ENCODE measurements at regions of chr5 and their contacts with region 1.

Region 1: DNA sequence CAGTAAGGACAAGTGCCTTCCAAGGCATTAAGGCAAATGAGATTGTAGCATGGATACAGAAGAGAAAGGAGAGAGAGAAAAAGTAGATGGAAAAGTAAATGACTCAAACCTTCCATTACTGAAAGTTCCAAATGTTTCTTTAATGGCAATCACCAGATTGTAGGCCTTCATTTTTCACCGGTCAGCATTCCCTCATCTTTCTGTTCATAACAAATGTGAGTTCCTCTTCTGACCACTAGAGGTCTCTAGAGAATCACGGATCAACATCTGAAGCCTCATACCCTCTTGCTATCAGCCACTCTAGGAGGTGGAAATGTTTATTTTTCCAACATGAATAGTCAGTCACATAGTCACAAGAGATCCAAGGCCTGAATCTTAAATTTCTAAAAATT is 73.6 kb upstream of the RPS23 start:
- DNase-seq: no peak
- ATAC-seq: no peak
- H3K4me3 Mint-ChIP-seq: no peak overlapping the region
- H3K27ac Mint-ChIP-seq: no peak overlapping the region
- H3K4me1 Mint-ChIP-seq: peaks cover 21% of the 10 kb centered on the region
- H3K27me3 Mint-ChIP-seq: no peaks in the 10 kb centered on the region

Region 2: GRCh38 chr5:82320966-82321365 is 30.8 kb before region 1 on chr5:
- CTCF ChIA-PET with region 1: no interaction called
- POLR2A ChIA-PET with region 1: no interaction called
- intact Hi-C with region 1: no loop called
- DNase-seq: no peak
- ATAC-seq: no peak
- H3K4me3 Mint-ChIP-seq: no peak overlapping the region
- H3K27ac Mint-ChIP-seq: no peak overlapping the region
- H3K4me1 Mint-ChIP-seq: no peaks in the 10 kb centered on the region
- H3K27me3 Mint-ChIP-seq: peaks cover 19% of the 10 kb centered on the region

Region 3: GRCh38 chr5:82466986-82467561 is 115.3 kb after region 1 on chr5:
- CTCF ChIA-PET with region 1: no interaction called
- POLR2A ChIA-PET with region 1: no interaction called
- intact Hi-C with region 1: loop called in 1 of 2 experiments (anchors 10 kb)
- DNase-seq: no peak
- ATAC-seq: peak; percentile 30
- H3K4me3 Mint-ChIP-seq: no peak overlapping the region
- H3K27ac Mint-ChIP-seq: no peak overlapping the region
- H3K4me1 Mint-ChIP-seq: no peaks in the 10 kb centered on the region
- H3K27me3 Mint-ChIP-seq: peaks cover 2% of the 10 kb centered on the region

Region 4: DNA sequence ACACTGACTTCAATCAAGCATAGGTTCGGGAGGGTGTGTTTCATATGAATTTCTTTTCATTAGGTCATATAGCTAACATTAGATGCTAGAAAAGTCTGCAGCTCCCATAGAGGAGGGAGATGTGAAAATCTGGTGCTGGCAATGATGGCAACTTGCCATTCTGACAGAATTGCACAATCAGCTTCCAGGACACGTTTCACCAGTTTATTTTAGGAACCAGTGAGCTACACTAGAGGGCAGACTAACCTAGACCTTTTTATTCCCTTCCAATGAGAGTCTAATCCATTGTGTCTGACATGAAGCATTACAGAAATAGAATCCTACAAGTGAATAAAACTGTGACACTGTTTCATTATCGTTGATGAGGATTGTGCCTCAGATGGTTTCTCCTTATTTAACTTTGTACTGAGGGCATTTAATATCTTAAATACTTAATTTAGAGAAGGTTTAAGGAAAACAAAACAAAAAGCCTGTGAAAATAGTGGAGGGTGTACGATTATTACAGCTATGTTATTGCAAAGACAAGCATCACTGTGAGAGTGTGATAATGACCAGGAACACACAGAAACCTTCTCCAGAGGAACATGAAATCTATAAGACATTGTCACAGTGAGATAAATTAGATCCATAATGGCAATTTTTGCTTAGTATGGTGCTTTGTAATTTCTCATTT is 289.7 kb after region 1 on chr5:
- CTCF ChIA-PET with region 1: interaction called, 7 read pairs
- POLR2A ChIA-PET with region 1: no interaction called
- intact Hi-C with region 1: loop called (anchors 2 to 5 kb)
- DNase-seq: peak; percentile 29
- ATAC-seq: peak; percentile 74
- H3K4me3 Mint-ChIP-seq: no peak overlapping the region
- H3K27ac Mint-ChIP-seq: no peak overlapping the region
- H3K4me1 Mint-ChIP-seq: no peaks in the 10 kb centered on the region
- H3K27me3 Mint-ChIP-seq: no peaks in the 10 kb centered on the region

Region 5: DNA sequence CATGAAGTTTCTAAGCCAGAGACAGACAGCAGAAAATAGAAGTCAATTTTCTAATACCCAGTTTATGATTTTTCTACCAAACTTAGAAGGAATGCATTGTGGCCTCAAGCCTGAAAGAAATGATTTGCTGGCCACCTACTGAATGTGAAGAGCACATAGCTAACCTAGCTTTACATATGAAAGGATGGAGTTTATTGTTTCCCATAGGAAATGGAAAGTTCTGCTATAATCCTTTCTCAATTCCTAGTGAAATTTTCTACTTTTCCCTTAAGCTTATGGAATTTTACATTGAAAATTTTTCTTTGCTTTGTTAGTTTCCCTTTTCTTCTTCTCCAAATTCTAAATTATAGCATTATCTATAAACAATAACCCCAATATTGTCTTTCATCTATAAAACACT is 615.3 kb after region 1 on chr5:
- CTCF ChIA-PET with region 1: no interaction called
- POLR2A ChIA-PET with region 1: no interaction called
- intact Hi-C with region 1: loop called in 1 of 2 experiments (anchors 10 kb)
- DNase-seq: no peak
- ATAC-seq: no peak
- H3K4me3 Mint-ChIP-seq: no peak overlapping the region
- H3K27ac Mint-ChIP-seq: no peak overlapping the region
- H3K4me1 Mint-ChIP-seq: peaks cover 15% of the 10 kb centered on the region
- H3K27me3 Mint-ChIP-seq: no peaks in the 10 kb centered on the region

Region 6: GRCh38 chr5:83473346-83474163 is 1121.8 kb after region 1 on chr5:
- CTCF ChIA-PET with region 1: no interaction called
- POLR2A ChIA-PET with region 1: interaction called, 4 read pairs
- intact Hi-C with region 1: loop called (anchors 2 to 10 kb)
- DNase-seq: peak; percentile 79
- ATAC-seq: peak; percentile 69
- H3K4me3 Mint-ChIP-seq: peak overlapping the region; percentile 75
- H3K27ac Mint-ChIP-seq: no peak overlapping the region
- H3K4me1 Mint-ChIP-seq: peaks cover 38% of the 10 kb centered on the region
- H3K27me3 Mint-ChIP-seq: peaks cover 58% of the 10 kb centered on the region